Ovary (tissue), 10 donors: ENCODE measurements at regions of chr4 and their contacts with region 1.

Region 1: DNA sequence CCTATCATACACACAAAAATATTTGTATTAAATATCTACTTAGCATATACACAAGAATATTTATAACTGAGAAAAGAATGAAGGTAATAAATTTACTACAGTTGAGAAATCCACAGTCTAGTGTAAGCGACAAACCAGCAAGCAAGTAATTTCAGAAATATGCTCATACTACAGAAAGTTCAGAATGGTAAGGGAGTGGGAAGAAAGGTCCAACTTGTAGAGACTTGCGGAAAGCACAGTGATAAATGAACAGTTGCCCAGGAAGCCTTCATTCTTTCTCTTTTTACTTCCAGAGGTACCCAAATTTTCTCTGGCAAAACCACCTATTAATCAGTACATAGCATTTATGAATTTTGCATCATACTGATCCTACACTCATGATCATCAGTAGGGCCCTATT is 438.1 kb upstream of the PCDH10 start:
- DNase-seq: no peak
- H3K4me3 ChIP-seq: no peak overlapping the region
- H3K27ac ChIP-seq: no peak overlapping the region
- H3K4me1 ChIP-seq: no peaks in the 10 kb centered on the region
- H3K27me3 ChIP-seq: no peaks in the 10 kb centered on the region
- CTCF ChIP-seq: no peak
- EP300 ChIP-seq: no peak
- POLR2A ChIP-seq: no peak

Region 2: DNA sequence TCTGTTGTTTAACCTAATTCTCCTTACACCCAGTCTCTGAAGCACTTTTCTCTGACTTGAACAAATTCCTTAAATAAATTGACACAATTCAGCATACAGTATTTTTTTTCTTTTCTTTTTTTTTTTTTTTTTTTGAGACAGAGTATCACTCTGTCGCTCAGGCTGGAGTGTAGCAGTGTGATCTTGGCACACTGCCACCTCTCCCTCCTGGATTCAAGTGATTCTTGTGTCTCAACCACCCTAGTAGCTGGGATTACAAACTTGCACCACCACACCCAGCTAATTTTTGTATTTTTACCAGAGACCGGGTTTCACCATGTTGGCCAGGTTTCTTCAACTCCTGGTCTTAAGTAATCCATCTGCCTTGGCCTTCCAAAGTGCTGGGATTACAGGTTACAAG is 1060.0 kb before region 1 on chr4:
- intact Hi-C with region 1: loop called in 1 of 4 experiments (anchors 10 kb)
- DNase-seq: no peak
- H3K4me3 ChIP-seq: no peak overlapping the region
- H3K27ac ChIP-seq: no peak overlapping the region
- H3K4me1 ChIP-seq: no peaks in the 10 kb centered on the region
- H3K27me3 ChIP-seq: no peaks in the 10 kb centered on the region
- CTCF ChIP-seq: no peak
- EP300 ChIP-seq: no peak
- POLR2A ChIP-seq: no peak

Region 3: DNA sequence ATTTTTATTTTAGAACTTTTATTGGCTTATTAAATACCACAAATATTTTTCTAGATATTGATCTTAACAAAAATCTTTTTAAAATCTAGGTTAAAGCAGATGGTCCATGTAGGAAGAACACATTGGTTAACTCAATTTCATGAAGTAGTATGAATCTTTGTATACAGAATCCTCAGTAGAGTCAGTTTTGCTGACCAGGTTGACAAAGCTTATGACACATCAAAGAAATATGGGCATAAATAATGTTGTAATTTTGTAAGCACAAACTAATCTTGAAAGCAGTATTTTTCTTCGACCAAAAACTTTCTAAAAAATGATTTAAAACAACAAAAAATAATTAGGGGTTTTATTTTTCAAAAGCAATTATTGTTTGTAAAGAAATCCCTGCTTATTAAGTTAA is 41.2 kb before region 1 on chr4:
- intact Hi-C with region 1: no loop called
- DNase-seq: no peak
- H3K4me3 ChIP-seq: no peak overlapping the region
- H3K27ac ChIP-seq: no peak overlapping the region
- H3K4me1 ChIP-seq: no peaks in the 10 kb centered on the region
- H3K27me3 ChIP-seq: no peaks in the 10 kb centered on the region
- CTCF ChIP-seq: no peak
- EP300 ChIP-seq: no peak
- POLR2A ChIP-seq: no peak

Region 4: GRCh38 chr4:134313591-134313990 is 1602.6 kb after region 1 on chr4:
- intact Hi-C with region 1: no loop called
- DNase-seq: no peak
- H3K4me3 ChIP-seq: no peak overlapping the region
- H3K27ac ChIP-seq: no peak overlapping the region
- H3K4me1 ChIP-seq: no peaks in the 10 kb centered on the region
- H3K27me3 ChIP-seq: no peaks in the 10 kb centered on the region
- CTCF ChIP-seq: no peak
- EP300 ChIP-seq: no peak
- POLR2A ChIP-seq: no peak